Activated CD4-positive, alpha-beta T cell treated with anti-CD3 and anti-CD28 coated beads, Interleukin-2, amount 10 ng/mL, durations not matched to agents 24 days and 14 days (primary cell): ENCODE measurements at regions of chr2 and their contacts with region 1.

Region 1: DNA sequence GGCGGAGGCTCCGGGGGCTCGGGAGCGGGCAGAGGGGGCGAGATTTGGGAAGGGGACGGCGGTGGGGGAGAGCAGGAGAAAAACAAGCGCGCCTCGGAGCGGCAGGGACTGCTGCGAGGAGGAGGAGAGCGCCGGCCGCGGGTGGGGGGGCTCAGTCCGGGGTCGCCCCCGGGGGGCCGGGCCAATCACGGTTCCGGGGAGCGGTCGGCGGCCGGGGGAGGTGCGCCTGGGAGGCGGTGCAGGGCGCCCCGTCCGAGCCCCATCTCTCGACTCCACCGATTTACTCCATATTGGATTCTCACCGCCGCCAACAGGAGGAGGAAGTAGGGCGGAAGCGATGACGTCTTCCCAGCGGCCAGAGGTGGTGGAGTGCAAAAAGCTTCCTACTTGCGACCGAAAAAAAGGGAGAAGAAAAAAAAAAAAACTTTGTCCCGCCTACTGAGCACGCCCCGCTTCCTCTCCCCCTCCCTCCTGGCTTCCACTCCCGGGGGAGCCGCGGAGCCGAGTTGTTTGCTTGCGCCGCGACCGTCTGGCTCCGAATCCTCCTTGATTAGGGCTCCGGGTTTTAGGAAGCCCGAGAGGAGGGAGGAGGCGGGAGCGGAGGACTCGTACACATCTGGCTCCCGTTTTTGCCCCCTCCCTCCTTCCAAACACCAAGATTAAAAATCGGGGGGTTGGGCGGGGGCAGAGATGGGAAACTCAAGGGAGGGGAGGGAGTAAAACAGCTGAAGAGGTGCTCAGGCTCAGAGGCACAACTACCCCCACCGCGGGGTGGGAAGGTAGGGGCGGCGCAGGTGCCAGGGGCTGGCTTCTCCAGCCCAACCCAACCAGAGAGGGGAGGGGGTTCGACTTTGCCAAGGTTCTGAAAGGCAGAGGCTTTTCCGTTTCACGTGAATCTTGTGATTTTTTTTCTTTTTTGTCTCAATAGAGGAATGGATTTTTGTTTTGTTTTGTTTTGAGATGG is at the start of gene SPRED2:
- DNase-seq: peak; percentile 93
- H3K4me3 Mint-ChIP-seq: peak within 1 kb of the TSS; percentile 97
- H3K27ac Mint-ChIP-seq: peak within 1 kb of the TSS; percentile 89
- H3K4me1 Mint-ChIP-seq: peaks cover 31% of the 10 kb centered on the region
- H3K27me3 Mint-ChIP-seq: peaks cover 36% of the 10 kb centered on the region
- total RNA-seq, gene SPRED2: 7.7 and 9.2 TPM in 2 replicates

Region 2: GRCh38 chr2:65129826-65130663 is 302.5 kb before region 1 on chr2 and contains the start of gene RAB1A:
- intact Hi-C with region 1: loop called (anchors 5 kb)
- DNase-seq: peak; percentile 99
- H3K4me3 Mint-ChIP-seq: peak within 1 kb of the TSS; percentile 95
- H3K27ac Mint-ChIP-seq: peak within 1 kb of the TSS; percentile 98
- H3K4me1 Mint-ChIP-seq: peaks cover 24% of the 10 kb centered on the region
- H3K27me3 Mint-ChIP-seq: peaks cover 3% of the 10 kb centered on the region
- total RNA-seq, gene RAB1A: 79.9 and 81.1 TPM in 2 replicates

Region 3: GRCh38 chr2:65252640-65253039 is 179.9 kb before region 1 on chr2:
- intact Hi-C with region 1: no loop called
- DNase-seq: peak; percentile 35
- H3K4me3 Mint-ChIP-seq: no peak overlapping the region
- H3K27ac Mint-ChIP-seq: no peak overlapping the region
- H3K4me1 Mint-ChIP-seq: peaks cover 9% of the 10 kb centered on the region
- H3K27me3 Mint-ChIP-seq: no peaks in the 10 kb centered on the region

Region 4: DNA sequence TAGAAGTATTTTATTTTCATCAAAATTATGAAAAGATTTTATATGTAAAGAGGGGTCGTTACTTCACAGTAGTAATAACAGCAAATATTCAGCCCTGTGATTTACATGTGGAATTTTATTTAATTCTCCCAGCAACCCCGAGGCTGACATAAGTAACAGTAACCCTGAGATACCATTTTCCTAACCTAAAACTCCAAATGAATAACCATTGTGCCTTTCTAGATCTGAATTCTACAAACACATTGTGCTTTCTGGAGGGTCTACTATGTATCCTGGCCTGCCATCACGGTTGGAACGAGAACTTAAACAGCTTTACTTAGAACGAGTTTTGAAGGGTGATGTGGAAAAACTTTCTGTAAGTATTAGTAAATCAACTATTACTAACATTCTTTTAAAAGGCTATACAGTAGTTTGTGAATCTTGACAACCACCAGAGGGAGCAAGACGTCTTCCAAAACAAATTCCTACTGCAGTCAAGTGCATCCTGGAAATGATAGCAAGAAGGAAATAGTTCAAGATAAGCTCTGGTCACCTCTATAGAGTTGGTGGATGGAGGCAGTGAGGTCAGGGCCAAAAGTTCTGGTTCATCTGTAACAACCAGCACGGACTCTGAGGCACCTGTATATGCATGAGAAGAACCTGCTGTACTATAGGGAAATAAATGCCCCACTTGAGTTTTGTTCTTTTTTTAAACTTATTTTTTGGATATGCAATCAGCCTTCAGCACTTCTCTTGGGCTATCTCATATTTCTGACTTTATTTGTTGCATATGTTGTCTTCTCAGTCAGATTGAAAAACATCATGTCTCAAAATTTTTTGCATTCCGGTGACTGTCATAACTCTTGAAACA is 167.5 kb before region 1 on chr2:
- intact Hi-C with region 1: loop called (anchors 1 kb)
- DNase-seq: peak; percentile 70
- H3K4me3 Mint-ChIP-seq: no peak overlapping the region
- H3K27ac Mint-ChIP-seq: no peak overlapping the region
- H3K4me1 Mint-ChIP-seq: peaks cover 12% of the 10 kb centered on the region
- H3K27me3 Mint-ChIP-seq: no peaks in the 10 kb centered on the region

Region 5: DNA sequence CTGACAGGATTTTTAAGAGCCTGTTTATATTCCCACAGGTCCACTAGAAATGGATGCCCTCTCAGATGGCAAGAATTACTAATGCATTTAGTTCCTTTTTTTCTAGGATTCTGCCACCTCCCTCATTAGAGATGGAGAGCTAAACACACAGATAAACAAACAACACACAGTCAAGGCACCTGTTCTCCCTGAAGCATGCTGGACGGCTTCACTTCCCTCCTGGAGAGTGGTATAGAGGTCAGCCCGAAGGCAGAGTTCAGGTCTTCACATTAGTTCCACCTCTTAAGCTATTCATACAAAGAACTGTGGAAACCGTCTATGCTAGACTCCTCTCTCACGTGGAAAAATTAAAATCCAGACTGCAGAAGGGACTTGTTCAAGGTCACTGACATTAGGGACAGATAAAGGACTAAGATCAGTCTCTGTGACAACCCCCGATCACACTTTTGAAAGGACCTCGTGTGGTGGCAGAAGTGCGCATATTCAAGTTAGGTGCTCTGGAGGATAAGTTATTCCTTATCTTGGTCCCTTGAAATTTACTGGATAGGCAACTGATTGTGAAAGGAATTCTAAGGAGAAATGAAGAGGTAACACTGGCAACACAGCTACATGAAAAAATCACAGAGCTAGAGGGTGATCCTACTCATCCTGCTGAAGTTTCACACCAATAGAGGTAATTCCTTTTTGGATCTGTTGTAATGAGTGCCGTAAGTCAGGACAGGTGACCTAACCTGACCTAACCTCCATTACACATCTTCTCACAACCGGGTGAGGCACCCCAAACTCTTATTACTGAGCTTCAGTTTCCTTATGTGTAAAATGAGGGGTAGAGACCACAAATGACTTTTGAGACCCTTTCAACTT is 75.2 kb before region 1 on chr2:
- intact Hi-C with region 1: loop called (anchors 2 kb)
- DNase-seq: no peak
- H3K4me3 Mint-ChIP-seq: peak overlapping the region; percentile 35
- H3K27ac Mint-ChIP-seq: peak overlapping the region; percentile 65
- H3K4me1 Mint-ChIP-seq: peaks cover 57% of the 10 kb centered on the region
- H3K27me3 Mint-ChIP-seq: peaks cover 8% of the 10 kb centered on the region

Region 6: GRCh38 chr2:65416945-65417344 is 15.6 kb before region 1 on chr2:
- intact Hi-C with region 1: loop called (anchors 2 kb)
- DNase-seq: no peak
- H3K4me3 Mint-ChIP-seq: peak overlapping the region; percentile 4
- H3K27ac Mint-ChIP-seq: peak overlapping the region; percentile 25
- H3K4me1 Mint-ChIP-seq: peaks cover 29% of the 10 kb centered on the region
- H3K27me3 Mint-ChIP-seq: no peaks in the 10 kb centered on the region

Region 7: GRCh38 chr2:67397143-67397986 is 1964.9 kb after region 1 on chr2 and contains the start of gene ETAA1:
- intact Hi-C with region 1: loop called (anchors 5 kb)
- DNase-seq: peak; percentile 98
- H3K4me3 Mint-ChIP-seq: peak within 1 kb of the TSS; percentile 97
- H3K27ac Mint-ChIP-seq: peak within 1 kb of the TSS; percentile 97
- H3K4me1 Mint-ChIP-seq: peaks cover 8% of the 10 kb centered on the region
- H3K27me3 Mint-ChIP-seq: peaks cover 2% of the 10 kb centered on the region
- total RNA-seq, gene ETAA1: 10.8 and 12.0 TPM in 2 replicates